ENCODE measurements at regions of chr10 and their contacts with region 1.

Region 1: GRCh38 chr10:120646738-120647456 is 189.9 kb downstream of the PLPP4 start:
- DNase-seq: no peak
- H3K4me3 ChIP-seq: no peak overlapping the region
- H3K27ac ChIP-seq: no peak overlapping the region
- H3K4me1 ChIP-seq: peaks cover 5 to 18% (median 12%) of the 10 kb centered on the region in 4 experiments
- H3K27me3 ChIP-seq: peaks cover 0 to 18% (median 14%) of the 10 kb centered on the region in 4 experiments; a peak in 5 of 7 replicates
- CTCF ChIP-seq: peak; percentile 23 to 38 (median 38); a peak in 3 of 4 replicates
- EP300 ChIP-seq: no peak
- POLR2A ChIP-seq: no peak
- RAD21 ChIP-seq: peak; percentile 36 to 57

Region 2: DNA sequence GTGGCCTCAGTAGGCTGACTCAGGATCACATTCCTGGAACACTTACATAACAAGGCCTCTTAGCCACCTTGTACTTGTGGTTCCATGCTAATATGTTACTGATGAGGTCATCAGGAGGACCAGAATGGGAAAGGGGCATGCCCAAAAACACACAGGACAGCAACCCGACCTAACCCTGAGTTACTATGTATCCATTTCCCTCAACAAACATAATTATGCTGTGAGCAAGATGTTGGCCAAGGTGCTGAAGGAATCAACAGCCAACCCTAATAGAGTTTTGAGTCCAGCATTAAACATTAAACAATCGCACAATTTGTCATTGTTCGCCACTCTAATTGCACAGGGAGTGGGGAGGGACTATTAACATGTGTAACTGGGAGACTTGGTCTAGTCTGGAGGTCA is 60.4 kb before region 1 on chr10:
- CTCF ChIA-PET with region 1: no interaction called
- POLR2A ChIA-PET with region 1: no interaction called
- DNase-seq: no peak
- H3K4me3 ChIP-seq: no peak overlapping the region
- H3K27ac ChIP-seq: no peak overlapping the region
- H3K4me1 ChIP-seq: no peaks in the 10 kb centered on the region
- H3K27me3 ChIP-seq: no peaks in the 10 kb centered on the region
- CTCF ChIP-seq: no peak
- EP300 ChIP-seq: no peak
- POLR2A ChIP-seq: no peak
- RAD21 ChIP-seq: no peak

Region 3: GRCh38 chr10:120634629-120635028 is 12.3 kb before region 1 on chr10:
- CTCF ChIA-PET with region 1: interaction called, 19 read pairs
- POLR2A ChIA-PET with region 1: interaction called, 4 read pairs
- DNase-seq: peak; percentile 54 to 93
- H3K4me3 ChIP-seq: no peak overlapping the region
- H3K27ac ChIP-seq: no peak overlapping the region
- H3K4me1 ChIP-seq: peaks cover 0 to 6% (median 3%) of the 10 kb centered on the region in 4 experiments; a peak in 2 of 7 replicates
- H3K27me3 ChIP-seq: no peaks in the 10 kb centered on the region
- CTCF ChIP-seq: peak; percentile 52 to 74 (median 58)
- EP300 ChIP-seq: no peak
- POLR2A ChIP-seq: no peak
- RAD21 ChIP-seq: peak; percentile 39 to 55

Measured in H1 (cell line).